Activated CD4-positive, alpha-beta T cell treated with anti-CD3 and anti-CD28 coated beads for 36 hours (primary cell): ENCODE measurements at regions of chr4 and their contacts with region 1.

Region 1: DNA sequence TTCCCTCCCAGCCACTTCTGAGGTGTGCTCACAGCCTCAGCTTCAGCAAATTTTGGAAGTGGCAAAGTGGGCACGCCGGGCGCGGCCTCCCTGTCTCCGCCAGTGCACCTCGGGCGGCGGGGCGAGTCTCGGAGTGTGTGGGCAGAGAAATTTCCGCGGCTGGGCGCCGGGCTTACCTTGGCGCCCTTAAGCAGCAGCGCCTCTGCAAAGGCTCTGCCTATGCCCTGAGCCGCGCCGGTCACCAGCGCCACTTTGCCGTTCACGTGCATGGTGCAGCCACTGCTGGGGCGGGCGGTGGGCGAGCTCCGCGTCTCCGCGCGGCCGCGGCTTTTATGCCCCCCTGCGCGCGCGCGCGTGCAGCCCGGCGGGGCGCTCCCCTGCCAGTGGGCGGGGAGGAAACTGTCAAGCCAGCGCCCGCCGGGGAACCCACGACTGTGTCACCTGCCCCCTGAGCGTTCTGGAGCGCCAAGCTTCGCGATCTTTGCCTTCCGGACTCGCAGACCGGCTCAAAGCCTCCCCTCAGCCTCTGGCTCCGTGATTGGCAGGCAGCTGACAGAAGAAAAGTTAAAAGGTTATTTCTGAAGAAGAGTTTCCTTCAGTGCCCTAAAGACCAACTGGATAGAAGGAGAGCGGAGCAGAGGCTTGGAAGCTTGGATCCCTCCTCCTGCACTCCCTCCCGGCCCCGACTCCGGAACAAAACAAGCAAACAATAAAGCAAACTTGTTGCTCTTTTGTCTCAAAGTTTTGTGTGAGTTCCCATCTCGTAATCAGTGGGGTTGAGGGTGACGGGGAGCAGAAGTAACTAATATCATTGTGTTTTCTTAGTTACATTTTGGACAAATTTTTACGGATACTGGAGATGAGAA is at the start of gene HPGD:
- DNase-seq: peak; percentile 78
- ATAC-seq: peak; percentile 92
- H3K4me3 Mint-ChIP-seq: peak within 1 kb of the TSS; percentile 70
- H3K27ac Mint-ChIP-seq: peak within 1 kb of the TSS; percentile 51
- H3K4me1 Mint-ChIP-seq: peaks cover 16% of the 10 kb centered on the region
- H3K27me3 Mint-ChIP-seq: peaks cover 24% of the 10 kb centered on the region
- total RNA-seq, gene HPGD: 1.6 to 2.5 TPM

Region 2: GRCh38 chr4:174222266-174222872 is 300.0 kb before region 1 on chr4:
- CTCF ChIA-PET with region 1: no interaction called
- POLR2A ChIA-PET with region 1: no interaction called
- intact Hi-C with region 1: loop called in 1 of 2 experiments (anchors 10 kb)
- DNase-seq: no peak
- ATAC-seq: peak; percentile 64
- H3K4me3 Mint-ChIP-seq: no peak overlapping the region
- H3K27ac Mint-ChIP-seq: no peak overlapping the region
- H3K4me1 Mint-ChIP-seq: peaks cover 8% of the 10 kb centered on the region
- H3K27me3 Mint-ChIP-seq: peaks cover 41% of the 10 kb centered on the region

Region 3: GRCh38 chr4:174278467-174278866 is 243.9 kb before region 1 on chr4:
- CTCF ChIA-PET with region 1: no interaction called
- POLR2A ChIA-PET with region 1: no interaction called
- intact Hi-C with region 1: no loop called
- DNase-seq: no peak
- ATAC-seq: no peak
- H3K4me3 Mint-ChIP-seq: no peak overlapping the region
- H3K27ac Mint-ChIP-seq: no peak overlapping the region
- H3K4me1 Mint-ChIP-seq: peaks cover 58% of the 10 kb centered on the region
- H3K27me3 Mint-ChIP-seq: no peaks in the 10 kb centered on the region

Region 4: DNA sequence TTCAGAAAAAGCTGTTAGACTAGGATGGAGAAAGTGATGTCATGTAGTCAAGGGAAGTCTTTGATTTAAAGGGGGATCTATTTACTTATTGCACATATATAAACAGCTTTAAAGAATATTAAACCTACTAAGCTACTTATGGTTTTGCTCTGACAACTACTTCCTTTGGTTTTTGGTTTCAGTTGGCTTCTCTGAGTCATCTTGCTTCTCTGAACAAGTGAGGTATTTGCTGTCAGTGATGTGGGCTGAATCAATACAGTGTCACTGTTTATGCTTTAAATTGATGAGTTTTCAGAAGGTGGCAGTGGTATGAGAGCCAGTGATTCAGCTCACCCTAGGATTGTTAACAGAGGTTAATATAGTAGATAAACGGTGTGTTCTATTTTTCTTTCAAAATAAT is 163.6 kb before region 1 on chr4:
- CTCF ChIA-PET with region 1: interaction called, 3 read pairs
- POLR2A ChIA-PET with region 1: no interaction called
- intact Hi-C with region 1: loop called in 1 of 2 experiments (anchors 5 kb)
- DNase-seq: peak; percentile 14
- ATAC-seq: peak; percentile 98
- H3K4me3 Mint-ChIP-seq: no peak overlapping the region
- H3K27ac Mint-ChIP-seq: no peak overlapping the region
- H3K4me1 Mint-ChIP-seq: peaks cover 10% of the 10 kb centered on the region
- H3K27me3 Mint-ChIP-seq: peaks cover 27% of the 10 kb centered on the region

Region 5: GRCh38 chr4:174398728-174399127 is 123.7 kb before region 1 on chr4:
- CTCF ChIA-PET with region 1: no interaction called
- POLR2A ChIA-PET with region 1: no interaction called
- intact Hi-C with region 1: no loop called
- DNase-seq: no peak
- ATAC-seq: no peak
- H3K4me3 Mint-ChIP-seq: no peak overlapping the region
- H3K27ac Mint-ChIP-seq: no peak overlapping the region
- H3K4me1 Mint-ChIP-seq: no peaks in the 10 kb centered on the region
- H3K27me3 Mint-ChIP-seq: peaks cover 4% of the 10 kb centered on the region

Region 6: DNA sequence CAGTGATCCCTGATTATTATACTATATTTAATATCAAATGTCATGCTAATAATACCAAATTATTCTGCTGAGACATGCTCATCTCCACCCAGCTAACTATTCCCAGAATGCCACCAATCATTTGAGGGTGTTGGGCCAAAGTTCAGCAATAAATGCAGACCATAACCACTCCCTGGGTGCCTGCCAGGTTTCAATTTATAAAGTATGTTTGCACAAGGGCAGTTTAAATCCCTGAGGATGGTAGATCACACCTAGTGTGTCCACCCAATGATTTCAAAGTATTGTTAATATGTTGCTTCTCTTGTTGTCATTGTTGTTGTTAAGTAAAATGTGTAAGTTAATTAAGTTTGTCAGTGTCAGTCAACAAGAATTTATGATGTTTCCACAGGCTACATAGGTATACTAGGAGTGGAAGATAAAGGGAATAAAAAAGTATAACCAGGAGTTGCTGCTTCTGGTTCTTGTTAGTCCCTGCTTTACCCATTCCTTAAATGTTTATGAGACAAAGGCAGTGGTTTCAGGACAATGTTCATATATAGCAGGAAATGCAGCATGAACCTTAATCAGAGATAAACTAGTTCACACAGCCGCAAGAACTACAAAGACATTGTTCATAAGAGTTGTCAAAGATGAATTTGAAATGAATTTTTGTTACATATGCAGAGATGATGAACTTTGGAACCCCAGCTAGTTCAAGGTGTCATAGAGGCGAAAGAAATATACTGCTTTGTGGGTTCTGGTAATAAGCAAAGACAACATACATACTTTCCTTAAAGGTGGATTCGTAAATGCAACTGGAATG is 25.6 kb before region 1 on chr4:
- CTCF ChIA-PET with region 1: no interaction called
- POLR2A ChIA-PET with region 1: interaction called, 3 read pairs
- intact Hi-C with region 1: loop called in 1 of 2 experiments (anchors 2 kb)
- DNase-seq: no peak
- ATAC-seq: no peak
- H3K4me3 Mint-ChIP-seq: peak overlapping the region; percentile 12
- H3K27ac Mint-ChIP-seq: no peak overlapping the region
- H3K4me1 Mint-ChIP-seq: peaks cover 10% of the 10 kb centered on the region
- H3K27me3 Mint-ChIP-seq: peaks cover 3% of the 10 kb centered on the region